A673 (cell line): ENCODE measurements at regions of chr6 and their contacts with region 1.

Region 1: DNA sequence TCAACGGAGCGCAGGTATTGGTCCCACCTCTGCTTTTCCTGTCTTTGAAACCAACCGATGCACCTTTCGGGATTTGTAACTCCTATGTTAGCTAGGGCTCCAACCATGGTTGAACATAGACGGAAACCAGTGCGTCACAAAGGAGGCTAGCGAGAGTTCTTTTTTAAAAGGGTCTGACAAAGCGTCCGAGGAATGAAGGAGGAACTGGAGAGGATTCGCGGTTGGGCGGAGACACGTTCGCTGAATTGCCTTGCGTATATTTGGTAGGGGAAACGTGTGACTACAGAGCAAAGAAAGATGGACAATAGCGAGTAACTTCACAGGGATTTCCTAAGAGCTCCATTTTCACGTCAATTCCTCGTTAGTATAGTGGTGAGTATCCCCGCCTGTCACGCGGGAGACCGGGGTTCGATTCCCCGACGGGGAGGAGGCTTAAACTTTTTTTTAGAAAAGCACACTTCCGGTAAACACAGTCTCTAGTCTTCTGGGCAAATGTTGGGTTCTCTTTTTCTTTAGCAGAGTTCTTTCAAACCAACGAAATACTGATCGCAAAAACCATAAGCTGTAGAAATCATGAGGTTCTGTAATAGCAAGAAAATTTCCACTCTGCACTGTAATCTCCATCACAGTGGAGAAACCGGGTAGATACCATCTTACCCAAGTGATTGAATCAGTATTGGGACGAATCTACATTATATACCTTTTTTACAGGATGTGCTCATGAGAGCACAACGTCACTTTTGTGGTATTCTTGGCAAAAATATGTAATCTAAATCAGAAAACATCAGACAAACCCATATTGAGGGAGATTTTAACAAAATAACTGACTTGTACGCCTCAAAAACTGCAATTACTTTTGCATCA is 6.6 kb upstream of the ZNF184 start:
- DNase-seq: peak; percentile 91
- H3K4me3 ChIP-seq: peak overlapping the region; percentile 62
- H3K27ac ChIP-seq: peak overlapping the region; percentile 71
- H3K4me1 ChIP-seq: peaks cover 4% of the 10 kb centered on the region
- H3K27me3 ChIP-seq: no peaks in the 10 kb centered on the region
- CTCF ChIP-seq: no peak

Region 2: GRCh38 chr6:27295301-27296081 is 184.1 kb before region 1 on chr6:
- CTCF ChIA-PET with region 1: no interaction called
- POLR2A ChIA-PET with region 1: no interaction called
- intact Hi-C with region 1: loop called (anchors 5 kb)
- DNase-seq: peak; percentile 91
- H3K4me3 ChIP-seq: peak overlapping the region; percentile 69
- H3K27ac ChIP-seq: no peak overlapping the region
- H3K4me1 ChIP-seq: peaks cover 10% of the 10 kb centered on the region
- H3K27me3 ChIP-seq: no peaks in the 10 kb centered on the region
- CTCF ChIP-seq: no peak

Region 3: GRCh38 chr6:27318973-27319372 is 160.6 kb before region 1 on chr6:
- CTCF ChIA-PET with region 1: no interaction called
- POLR2A ChIA-PET with region 1: no interaction called
- intact Hi-C with region 1: no loop called
- DNase-seq: no peak
- H3K4me3 ChIP-seq: no peak overlapping the region
- H3K27ac ChIP-seq: no peak overlapping the region
- H3K4me1 ChIP-seq: no peaks in the 10 kb centered on the region
- H3K27me3 ChIP-seq: no peaks in the 10 kb centered on the region
- CTCF ChIP-seq: no peak

Region 4: DNA sequence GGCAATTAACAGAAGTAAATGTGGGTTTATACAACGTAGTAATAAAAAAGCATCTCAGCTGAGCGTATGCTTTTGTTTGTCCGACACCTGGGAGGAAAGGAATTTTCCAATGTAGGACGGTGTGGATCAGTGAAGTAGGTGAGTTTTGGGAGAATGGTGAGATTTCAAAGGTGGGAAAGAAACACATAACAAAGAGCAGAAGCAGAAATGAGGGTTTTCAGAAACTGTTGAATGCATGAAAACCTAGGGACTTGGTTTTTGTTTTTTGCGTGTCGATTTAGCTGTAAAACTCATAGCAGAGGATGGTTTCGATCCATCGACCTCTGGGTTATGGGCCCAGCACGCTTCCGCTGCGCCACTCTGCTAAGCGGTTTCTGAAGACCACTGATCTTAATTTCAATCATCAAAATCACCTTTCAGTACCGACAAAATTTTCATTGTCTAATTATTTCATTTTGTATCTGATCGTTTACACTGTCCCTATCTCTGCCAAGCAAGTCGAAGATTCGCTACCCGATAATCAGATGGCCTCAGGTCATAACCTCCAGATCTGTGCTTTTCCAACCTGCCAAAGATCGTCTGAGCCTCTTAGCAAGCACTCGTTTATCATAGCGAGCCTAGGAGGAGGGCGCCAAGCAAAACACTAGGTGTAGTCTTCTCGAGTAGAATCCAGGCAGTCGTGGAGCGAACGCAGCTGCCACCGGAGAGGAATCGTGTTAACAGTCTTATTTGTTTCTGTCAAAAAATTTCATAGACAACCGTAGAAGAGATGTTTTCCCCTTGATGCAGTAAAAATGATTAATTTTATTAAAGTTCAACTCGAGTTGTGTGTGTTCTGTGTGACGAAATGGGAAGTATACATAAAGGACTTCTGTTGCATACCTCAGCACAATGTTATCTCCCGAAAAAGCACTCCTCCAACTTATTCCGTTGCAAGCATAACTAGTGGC is 146.6 kb before region 1 on chr6:
- CTCF ChIA-PET with region 1: no interaction called
- POLR2A ChIA-PET with region 1: no interaction called
- intact Hi-C with region 1: loop called (anchors 2 kb)
- DNase-seq: peak; percentile 81
- H3K4me3 ChIP-seq: peak overlapping the region; percentile 58
- H3K27ac ChIP-seq: no peak overlapping the region
- H3K4me1 ChIP-seq: peaks cover 4% of the 10 kb centered on the region
- H3K27me3 ChIP-seq: no peaks in the 10 kb centered on the region
- CTCF ChIP-seq: no peak

Region 5: GRCh38 chr6:27592481-27593199 is 113.1 kb after region 1 on chr6:
- CTCF ChIA-PET with region 1: no interaction called
- POLR2A ChIA-PET with region 1: no interaction called
- intact Hi-C with region 1: loop called (anchors 5 kb)
- DNase-seq: peak; percentile 94
- H3K4me3 ChIP-seq: peak overlapping the region; percentile 51
- H3K27ac ChIP-seq: no peak overlapping the region
- H3K4me1 ChIP-seq: no peaks in the 10 kb centered on the region
- H3K27me3 ChIP-seq: no peaks in the 10 kb centered on the region
- CTCF ChIP-seq: no peak